ENCODE measurements at regions of chr17 and their contacts with region 1.

Region 1: DNA sequence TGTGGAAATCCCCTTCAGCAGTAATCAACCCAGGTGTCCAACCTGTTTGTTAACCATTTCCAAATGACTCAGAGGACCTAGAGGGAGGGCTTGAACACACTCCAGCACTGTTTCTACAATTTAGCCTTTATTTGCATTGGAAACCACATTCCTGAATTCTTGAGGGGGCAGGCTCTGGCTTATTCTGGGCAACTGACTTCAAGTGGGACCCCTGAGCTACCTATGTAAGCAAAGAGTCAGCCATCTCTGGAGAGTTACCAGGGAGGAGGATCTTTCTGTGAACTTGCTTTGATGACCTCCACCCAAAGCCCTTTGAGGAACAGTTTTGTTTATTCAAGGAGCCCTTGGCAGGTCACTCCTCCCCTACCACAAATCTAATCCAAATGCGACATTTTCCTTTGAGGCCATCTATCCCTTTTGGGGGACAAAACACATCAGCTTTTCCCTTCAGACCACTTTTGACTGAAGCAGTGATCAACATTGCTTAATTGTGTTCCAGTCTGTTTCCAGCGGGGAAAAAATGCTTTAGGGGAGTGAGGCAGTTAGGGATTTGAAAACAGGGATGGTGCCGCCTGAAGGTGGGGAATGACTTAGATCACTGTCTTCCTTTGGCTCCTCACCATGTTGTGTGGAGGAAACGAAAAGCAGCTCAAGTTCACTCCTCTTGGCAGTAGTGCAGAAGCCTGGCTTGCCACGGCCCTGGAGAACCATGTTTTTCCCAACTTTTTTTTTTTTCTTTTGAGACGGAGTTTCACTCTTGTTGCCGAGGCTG is 46.2 kb downstream of the TUBD1 start:
- DNase-seq: peak in 2 of 3 donors; percentile 63 to 73
- H3K4me3 ChIP-seq: peak overlapping the region in 1 of 3 experiments; percentile 64
- H3K4me3 Mint-ChIP-seq: no peak overlapping the region
- H3K27ac ChIP-seq: peak overlapping the region; percentile 91 to 95
- H3K27ac Mint-ChIP-seq: peak overlapping the region; percentile 85 to 100 (median 94)
- H3K4me1 ChIP-seq: peaks cover 81 to 99% of the 10 kb centered on the region in 2 donors
- H3K4me1 Mint-ChIP-seq: peaks cover 89% of the 10 kb centered on the region
- H3K27me3 ChIP-seq: no peaks in the 10 kb centered on the region
- H3K27me3 Mint-ChIP-seq: peaks cover 0 to 2% (median 0%) of the 10 kb centered on the region in 3 donors
- CTCF ChIP-seq: no peak

Region 2: GRCh38 chr17:59619293-59620063 is 227.1 kb before region 1 on chr17 and contains the start of gene CLTC:
- intact Hi-C with region 1: loop called in 1 of 2 experiments (anchors 10 kb)
- DNase-seq: peak; percentile 91 to 98 (median 97)
- H3K4me3 ChIP-seq: peak within 1 kb of the TSS; percentile 71 to 100 (median 78)
- H3K4me3 Mint-ChIP-seq: peak within 1 kb of the TSS; percentile 92 to 96
- H3K27ac ChIP-seq: peak within 1 kb of the TSS; percentile 98 to 100
- H3K27ac Mint-ChIP-seq: peak within 1 kb of the TSS; percentile 99 to 100 (median 99)
- H3K4me1 ChIP-seq: peaks cover 35 to 51% of the 10 kb centered on the region in 2 donors
- H3K4me1 Mint-ChIP-seq: peaks cover 41% of the 10 kb centered on the region
- H3K27me3 ChIP-seq: no peaks in the 10 kb centered on the region
- H3K27me3 Mint-ChIP-seq: peaks cover 0 to 1% (median 0%) of the 10 kb centered on the region in 3 donors
- CTCF ChIP-seq: no peak
- polyA plus RNA-seq, gene CLTC: 63.3 to 102 (median 65.1) TPM

Region 3: GRCh38 chr17:59753522-59754467 is 92.8 kb before region 1 on chr17:
- intact Hi-C with region 1: loop called in 1 of 2 experiments (anchors 5 kb)
- DNase-seq: peak; percentile 70 to 80 (median 78)
- H3K4me3 ChIP-seq: peak overlapping the region; percentile 12 to 66 (median 33)
- H3K4me3 Mint-ChIP-seq: peak overlapping the region; percentile 4 to 39
- H3K27ac ChIP-seq: peak overlapping the region in 1 of 2 donors; percentile 71
- H3K27ac Mint-ChIP-seq: peak overlapping the region in 6 of 7 donors; percentile 20 to 92 (median 74)
- H3K4me1 ChIP-seq: peaks cover 26 to 44% of the 10 kb centered on the region in 2 donors
- H3K4me1 Mint-ChIP-seq: peaks cover 33% of the 10 kb centered on the region
- H3K27me3 ChIP-seq: no peaks in the 10 kb centered on the region
- H3K27me3 Mint-ChIP-seq: peaks cover 0 to 2% (median 1%) of the 10 kb centered on the region in 3 donors
- CTCF ChIP-seq: peak; percentile 77

Region 4: GRCh38 chr17:59804901-59805465 is 41.6 kb before region 1 on chr17:
- intact Hi-C with region 1: loop called in 1 of 2 experiments (anchors 5 kb)
- DNase-seq: peak; percentile 61 to 92 (median 82)
- H3K4me3 ChIP-seq: peak overlapping the region; percentile 2 to 72 (median 51)
- H3K4me3 Mint-ChIP-seq: peak overlapping the region; percentile 70 to 83
- H3K27ac ChIP-seq: peak overlapping the region; percentile 83 to 95
- H3K27ac Mint-ChIP-seq: peak overlapping the region; percentile 95 to 99 (median 98)
- H3K4me1 ChIP-seq: peaks cover 32 to 77% of the 10 kb centered on the region in 2 donors
- H3K4me1 Mint-ChIP-seq: peaks cover 35% of the 10 kb centered on the region
- H3K27me3 ChIP-seq: no peaks in the 10 kb centered on the region
- H3K27me3 Mint-ChIP-seq: peaks cover 0 to 2% (median 0%) of the 10 kb centered on the region in 3 donors
- CTCF ChIP-seq: no peak